Panc1 (cell line): ENCODE measurements at regions of chr13 and their contacts with region 1.

Region 1: DNA sequence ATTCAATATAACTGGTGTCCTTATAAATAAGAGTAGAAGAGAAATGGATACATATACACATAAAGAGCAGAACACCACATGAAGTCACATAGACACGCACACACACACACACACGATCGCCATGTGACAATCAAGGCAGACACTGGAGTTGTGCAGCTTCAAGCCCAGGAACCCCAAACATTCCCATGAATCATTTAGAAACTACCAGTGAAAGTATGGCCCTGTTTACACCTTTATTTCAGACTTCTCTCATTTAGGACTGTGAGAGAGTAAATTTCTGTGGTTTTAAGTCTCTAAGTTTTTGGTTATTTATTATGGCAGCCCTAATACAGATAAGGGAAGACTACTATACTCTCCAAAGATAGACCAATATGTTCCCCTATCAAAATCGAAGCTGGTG is 20.4 kb upstream of the TNFSF13B start:
- DNase-seq: no peak
- ATAC-seq: no peak
- H3K4me3 ChIP-seq: no peak overlapping the region
- H3K27ac ChIP-seq: no peak overlapping the region
- H3K4me1 ChIP-seq: no peaks in the 10 kb centered on the region
- H3K27me3 ChIP-seq: no peaks in the 10 kb centered on the region
- CTCF ChIP-seq: no peak

Region 2: DNA sequence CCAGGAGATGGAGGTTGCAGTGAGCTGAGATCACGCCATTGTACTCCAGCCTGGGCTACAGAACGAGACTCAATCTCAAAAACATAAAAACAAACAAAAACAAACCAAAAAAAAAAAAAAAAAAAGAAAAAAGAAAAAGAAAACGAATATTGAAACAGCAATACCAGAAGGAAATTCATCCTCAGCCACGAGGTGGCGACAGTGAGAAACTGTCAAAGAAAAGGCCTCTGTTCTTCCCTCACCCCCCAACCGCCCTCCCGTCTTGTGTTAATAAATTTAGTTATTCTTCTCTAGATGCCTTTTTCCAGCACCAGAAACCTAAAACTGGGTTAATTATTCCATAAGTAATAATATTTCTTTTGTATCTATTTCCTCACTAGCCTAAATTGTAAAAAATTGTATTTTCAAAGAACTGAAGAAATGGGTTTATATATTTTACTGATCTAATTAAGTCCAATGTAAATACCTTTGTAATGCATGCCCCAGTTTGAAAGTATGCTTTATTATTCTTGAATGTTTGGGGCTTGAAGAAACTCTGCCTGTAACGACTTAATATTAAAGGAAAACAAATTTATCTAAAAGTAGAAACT is 72.4 kb before region 1 on chr13:
- CTCF ChIA-PET with region 1: no interaction called
- POLR2A ChIA-PET with region 1: no interaction called
- in situ Hi-C with region 1: no loop called
- intact Hi-C with region 1: no loop called
- DNase-seq: no peak
- ATAC-seq: no peak
- H3K4me3 ChIP-seq: no peak overlapping the region
- H3K27ac ChIP-seq: no peak overlapping the region
- H3K4me1 ChIP-seq: no peaks in the 10 kb centered on the region
- H3K27me3 ChIP-seq: no peaks in the 10 kb centered on the region
- CTCF ChIP-seq: peak; percentile 51

Region 3: GRCh38 chr13:108227651-108228272 is 21.4 kb before region 1 on chr13:
- CTCF ChIA-PET with region 1: no interaction called
- POLR2A ChIA-PET with region 1: no interaction called
- in situ Hi-C with region 1: no loop called
- intact Hi-C with region 1: loop called (anchors 1 kb)
- DNase-seq: no peak
- ATAC-seq: no peak
- H3K4me3 ChIP-seq: no peak overlapping the region
- H3K27ac ChIP-seq: no peak overlapping the region
- H3K4me1 ChIP-seq: no peaks in the 10 kb centered on the region
- H3K27me3 ChIP-seq: no peaks in the 10 kb centered on the region
- CTCF ChIP-seq: peak; percentile 53; the same call in 1 of the 2 replicates